GM13976 (cell line): ENCODE measurements at regions of chr13 and their contacts with region 1.

Region 1: DNA sequence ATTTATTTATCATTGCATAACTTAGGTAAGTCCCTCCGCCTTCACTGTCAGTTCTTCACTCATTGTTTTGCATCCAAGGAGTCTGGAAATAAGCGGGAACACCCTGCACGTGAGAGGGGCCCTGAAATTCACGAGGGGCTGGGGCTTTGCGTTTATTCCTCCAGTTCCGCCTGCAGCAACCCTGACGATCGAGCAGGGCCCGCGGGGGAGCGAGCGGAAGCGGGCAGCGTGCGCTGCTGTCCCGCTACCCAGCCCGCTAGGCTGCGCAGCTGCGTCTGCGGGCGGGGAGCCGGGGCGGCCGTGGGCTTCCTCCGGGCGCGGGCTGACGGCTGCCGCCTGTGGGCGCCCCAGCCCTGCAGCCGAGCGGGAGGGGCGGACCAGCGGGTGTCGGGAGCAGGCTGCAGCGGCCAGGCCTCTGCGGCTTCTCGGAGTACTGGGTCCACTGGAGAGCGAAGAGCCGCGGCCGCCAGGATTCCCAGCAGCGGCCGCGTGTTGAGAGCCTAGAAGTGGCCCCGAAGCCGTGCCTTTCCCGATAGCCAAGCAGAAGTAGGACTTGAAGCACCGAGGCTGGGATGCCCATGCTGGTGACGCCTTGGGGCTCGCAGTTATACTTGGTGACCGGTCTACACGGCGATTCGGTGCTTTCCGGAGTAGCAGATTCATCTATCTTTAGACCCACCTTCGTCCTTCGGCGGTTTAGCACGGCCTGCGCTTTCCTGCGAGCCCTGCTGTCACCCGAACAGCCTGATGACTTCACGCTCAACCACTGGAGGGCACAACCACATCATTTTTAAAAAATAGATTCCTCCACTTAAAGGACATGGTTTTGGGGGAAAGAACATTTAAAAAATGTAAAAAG is 32.9 kb upstream of the SACS start:
- DNase-seq: peak; percentile 83
- CTCF ChIP-seq: peak; percentile 64

Region 2: GRCh38 chr13:22979092-22979491 is 487.3 kb before region 1 on chr13:
- in situ Hi-C with region 1: no loop called
- DNase-seq: no peak
- CTCF ChIP-seq: no peak

Region 3: GRCh38 chr13:23766283-23766682 is 299.9 kb after region 1 on chr13:
- in situ Hi-C with region 1: no loop called
- DNase-seq: no peak
- CTCF ChIP-seq: no peak

Region 4: GRCh38 chr13:23888658-23889614 is 422.6 kb after region 1 on chr13 and contains the start of gene MIPEP:
- in situ Hi-C with region 1: loop called (anchors 25 kb)
- DNase-seq: peak; percentile 96
- CTCF ChIP-seq: peak; percentile 88